IMR-90 (cell line): ENCODE measurements at regions of chr12 and their contacts with region 1.

Region 1: DNA sequence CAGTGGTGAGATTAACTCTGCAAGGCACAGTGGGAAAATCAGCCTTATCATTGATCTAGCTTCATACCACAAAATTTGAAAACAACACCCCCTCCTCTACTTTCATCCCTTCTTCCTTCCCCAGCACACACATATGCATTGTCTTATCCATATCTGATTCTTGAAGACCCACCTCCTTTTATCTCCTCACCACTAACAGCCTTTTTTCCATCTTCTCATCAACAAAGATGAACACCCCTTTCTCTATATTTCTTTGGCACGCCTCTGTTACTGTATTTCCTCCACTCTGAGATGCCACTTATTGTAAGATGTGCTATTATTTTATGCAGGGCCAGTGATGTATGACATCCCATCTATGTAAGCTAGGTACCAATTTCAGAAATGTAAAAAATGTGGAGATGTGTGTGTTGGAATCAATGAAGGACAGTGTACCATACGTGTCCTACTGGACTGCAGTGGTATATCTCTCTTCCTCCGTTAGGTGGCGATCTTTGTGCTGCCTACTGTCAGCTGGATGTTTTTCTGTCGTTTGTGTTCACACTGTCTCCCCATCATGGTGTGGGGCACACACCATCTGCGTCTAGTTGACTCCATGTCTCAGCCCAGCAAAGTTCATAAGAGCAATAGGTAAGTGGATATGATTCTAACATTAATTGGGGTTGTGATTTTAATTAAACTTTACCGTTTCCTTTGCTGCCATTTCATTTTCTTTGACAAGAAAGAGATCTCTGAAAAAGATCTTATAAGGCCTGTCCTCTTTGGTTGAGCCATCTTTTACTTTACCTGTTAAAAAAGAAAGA is 24.0 kb downstream of the CCDC38 start:
- DNase-seq: peak; percentile 42
- ATAC-seq: peak; percentile 98
- H3K4me3 ChIP-seq: no peak overlapping the region
- H3K27ac ChIP-seq: no peak overlapping the region
- H3K4me1 ChIP-seq: no peaks in the 10 kb centered on the region
- H3K27me3 ChIP-seq: peaks cover 7% of the 10 kb centered on the region
- CTCF ChIP-seq: peak; percentile 73
- POLR2A ChIP-seq: no peak
- RAD21 ChIP-seq: peak; percentile 66

Region 2: GRCh38 chr12:95480230-95480629 is 438.2 kb before region 1 on chr12:
- CTCF ChIA-PET with region 1: no interaction called
- POLR2A ChIA-PET with region 1: no interaction called
- dilution Hi-C with region 1: no loop called
- in situ Hi-C with region 1: no loop called
- intact Hi-C with region 1: no loop called
- DNase-seq: peak; percentile 69
- ATAC-seq: peak; percentile 86
- H3K4me3 ChIP-seq: no peak overlapping the region
- H3K27ac ChIP-seq: no peak overlapping the region
- H3K4me1 ChIP-seq: peaks cover 5% of the 10 kb centered on the region
- H3K27me3 ChIP-seq: no peaks in the 10 kb centered on the region
- CTCF ChIP-seq: no peak
- POLR2A ChIP-seq: no peak
- RAD21 ChIP-seq: no peak

Region 3: GRCh38 chr12:95998611-95999286 is 80.4 kb after region 1 on chr12:
- CTCF ChIA-PET with region 1: interaction called, 11 read pairs
- POLR2A ChIA-PET with region 1: no interaction called
- dilution Hi-C with region 1: no loop called
- in situ Hi-C with region 1: no loop called
- intact Hi-C with region 1: loop called (anchors 1 kb)
- DNase-seq: peak; percentile 61
- ATAC-seq: peak; percentile 94
- H3K4me3 ChIP-seq: no peak overlapping the region
- H3K27ac ChIP-seq: no peak overlapping the region
- H3K4me1 ChIP-seq: no peaks in the 10 kb centered on the region
- H3K27me3 ChIP-seq: no peaks in the 10 kb centered on the region
- CTCF ChIP-seq: peak; percentile 63
- POLR2A ChIP-seq: no peak
- RAD21 ChIP-seq: peak; percentile 65